CD8-positive, alpha-beta T cell (primary cell): ENCODE measurements at regions of chr11 and their contacts with region 1.

Region 1: DNA sequence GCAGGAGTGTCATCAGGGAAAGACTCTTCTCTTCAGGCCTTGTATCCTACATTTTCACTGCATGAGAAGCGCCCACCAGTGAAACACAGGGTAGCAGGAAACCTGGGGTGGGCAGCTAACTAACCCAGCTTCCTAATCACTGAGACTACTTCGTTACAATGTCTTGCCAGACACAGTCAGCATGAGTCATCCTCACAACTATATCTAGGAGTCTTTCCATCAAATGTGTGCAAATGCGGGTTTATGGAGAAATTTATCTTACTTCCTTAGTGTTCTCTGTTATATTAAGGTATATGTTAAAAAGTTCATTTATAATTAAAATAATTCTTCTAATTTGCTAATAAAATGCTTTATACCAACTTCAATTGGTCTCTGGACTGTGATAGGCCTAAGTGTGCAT is 79.9 kb upstream of the RAB1B start:
- DNase-seq: no peak
- ATAC-seq: no peak
- H3K4me3 ChIP-seq: no peak overlapping the region
- H3K4me3 Mint-ChIP-seq: no peak overlapping the region
- H3K27ac ChIP-seq: no peak overlapping the region
- H3K27ac Mint-ChIP-seq: peak overlapping the region; percentile 41
- H3K4me1 ChIP-seq: peaks cover 11% of the 10 kb centered on the region
- H3K4me1 Mint-ChIP-seq: peaks cover 60% of the 10 kb centered on the region
- H3K27me3 ChIP-seq: no peaks in the 10 kb centered on the region
- H3K27me3 Mint-ChIP-seq: no peaks in the 10 kb centered on the region
- CTCF ChIP-seq: no peak

Region 2: DNA sequence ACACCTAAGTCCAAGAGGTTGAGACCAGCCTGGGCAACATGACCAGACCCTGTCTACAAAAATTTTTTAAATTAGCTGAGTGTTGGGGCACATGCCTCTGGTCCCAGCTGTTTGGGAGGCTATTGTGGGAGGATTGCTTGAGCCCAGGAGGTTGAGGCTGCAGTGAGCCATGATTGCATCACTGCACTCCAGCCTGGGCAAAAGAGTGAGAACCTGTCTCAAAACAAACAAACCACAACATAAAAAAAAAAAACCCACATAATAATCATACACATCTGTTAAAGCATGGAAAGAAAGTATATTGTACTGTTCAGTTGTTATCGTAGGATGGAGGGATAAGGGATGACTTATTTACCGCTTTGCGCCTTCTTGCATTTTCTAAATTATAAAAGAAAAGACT is 1041.8 kb after region 1 on chr11:
- CTCF ChIA-PET with region 1: no interaction called
- POLR2A ChIA-PET with region 1: no interaction called
- intact Hi-C with region 1: loop called in 1 of 2 experiments (anchors 5 kb)
- DNase-seq: no peak
- ATAC-seq: no peak
- H3K4me3 ChIP-seq: no peak overlapping the region
- H3K4me3 Mint-ChIP-seq: no peak overlapping the region
- H3K27ac ChIP-seq: peak overlapping the region in 1 of 2 experiments; percentile 30
- H3K27ac Mint-ChIP-seq: no peak overlapping the region
- H3K4me1 ChIP-seq: no peaks in the 10 kb centered on the region
- H3K4me1 Mint-ChIP-seq: peaks cover 18% of the 10 kb centered on the region
- H3K27me3 ChIP-seq: no peaks in the 10 kb centered on the region
- H3K27me3 Mint-ChIP-seq: no peaks in the 10 kb centered on the region
- CTCF ChIP-seq: no peak